Dendritic cell treated with granulocyte-macrophage colony-stimulating factor and Interleukin-4, amounts not matched to agents 40 ng/mL and 50 ng/mL, for 4 days (primary cell): ENCODE measurements at regions of chr17 and their contacts with region 1.

Region 1: GRCh38 chr17:70552230-70552981 is 383.1 kb downstream of the KCNJ2 start:
- H3K4me3 Mint-ChIP-seq: no peak overlapping the region
- H3K27ac Mint-ChIP-seq: no peak overlapping the region
- H3K4me1 Mint-ChIP-seq: peaks cover 17% of the 10 kb centered on the region
- H3K27me3 Mint-ChIP-seq: no peaks in the 10 kb centered on the region

Region 2: GRCh38 chr17:69567130-69567529 is 985.3 kb before region 1 on chr17:
- intact Hi-C with region 1: loop called (anchors 5 kb)
- H3K4me3 Mint-ChIP-seq: no peak overlapping the region
- H3K27ac Mint-ChIP-seq: no peak overlapping the region
- H3K4me1 Mint-ChIP-seq: no peaks in the 10 kb centered on the region
- H3K27me3 Mint-ChIP-seq: peaks cover 17% of the 10 kb centered on the region

Region 3: DNA sequence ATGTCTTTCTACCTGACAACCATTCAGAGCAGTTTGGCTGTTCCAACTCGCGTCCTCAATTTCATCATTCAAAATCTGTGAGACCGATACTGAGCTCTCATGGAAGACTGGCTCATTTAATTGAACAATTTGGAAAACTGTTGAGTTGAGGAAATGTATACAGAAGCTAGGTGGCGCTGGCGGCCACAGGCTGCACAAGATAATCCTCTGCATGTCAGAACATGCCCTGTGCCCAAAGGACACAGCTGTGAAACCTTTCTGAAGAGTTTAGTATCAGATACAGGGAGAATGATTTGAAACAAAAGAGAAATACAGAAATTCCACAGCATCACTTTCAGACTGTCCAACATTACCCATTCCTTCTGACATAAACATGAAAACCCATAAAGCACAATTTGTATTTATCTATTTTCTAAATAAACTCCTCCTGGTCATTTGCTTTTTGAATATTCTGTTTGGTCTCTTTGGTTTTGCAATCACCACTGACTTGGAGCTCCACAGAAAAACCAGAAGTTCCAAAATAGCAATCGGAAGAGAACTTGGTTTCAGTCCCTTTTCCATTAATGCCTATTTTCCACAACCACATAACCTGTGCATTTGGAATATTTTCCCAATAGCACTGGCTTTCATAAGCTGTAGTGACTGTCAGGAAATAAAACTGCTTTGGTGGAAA is 945.1 kb before region 1 on chr17:
- intact Hi-C with region 1: loop called (anchors 5 kb)
- H3K4me3 Mint-ChIP-seq: peak overlapping the region; percentile 9
- H3K27ac Mint-ChIP-seq: peak overlapping the region; percentile 43
- H3K4me1 Mint-ChIP-seq: peaks cover 19% of the 10 kb centered on the region
- H3K27me3 Mint-ChIP-seq: no peaks in the 10 kb centered on the region

Region 4: DNA sequence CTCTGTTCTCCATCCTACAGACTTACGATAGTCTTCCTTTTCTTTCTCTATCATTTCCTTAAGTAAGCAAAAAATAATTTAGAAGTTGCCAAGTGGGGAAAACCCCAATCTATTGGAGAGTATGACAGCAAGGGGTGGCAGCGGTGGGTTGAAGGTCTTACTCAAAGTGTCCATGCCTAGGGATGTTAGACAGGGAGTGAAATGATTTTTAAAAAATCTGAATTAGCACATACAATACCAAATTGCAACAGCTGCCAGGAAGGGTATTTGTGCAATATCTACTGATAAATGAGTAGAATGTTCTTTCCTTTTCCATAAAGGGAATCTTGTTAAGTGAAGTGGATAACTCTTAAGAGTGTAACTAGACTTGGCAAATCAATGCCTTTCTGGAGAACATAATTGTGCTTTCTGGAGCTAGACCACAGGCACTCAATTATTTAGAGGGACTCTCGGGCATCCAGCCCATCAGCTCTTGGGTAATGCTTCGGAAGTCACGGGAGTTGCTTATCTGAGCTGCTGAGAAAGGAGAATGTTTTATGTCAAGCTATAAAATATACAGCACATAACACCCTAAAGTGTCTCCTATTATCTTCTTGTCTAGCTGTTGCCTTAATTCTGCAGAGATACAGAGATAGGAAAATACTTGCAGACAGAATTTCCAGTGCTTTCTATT is 231.6 kb before region 1 on chr17:
- intact Hi-C with region 1: no loop called
- H3K4me3 Mint-ChIP-seq: no peak overlapping the region
- H3K27ac Mint-ChIP-seq: no peak overlapping the region
- H3K4me1 Mint-ChIP-seq: peaks cover 13% of the 10 kb centered on the region
- H3K27me3 Mint-ChIP-seq: no peaks in the 10 kb centered on the region

Region 5: DNA sequence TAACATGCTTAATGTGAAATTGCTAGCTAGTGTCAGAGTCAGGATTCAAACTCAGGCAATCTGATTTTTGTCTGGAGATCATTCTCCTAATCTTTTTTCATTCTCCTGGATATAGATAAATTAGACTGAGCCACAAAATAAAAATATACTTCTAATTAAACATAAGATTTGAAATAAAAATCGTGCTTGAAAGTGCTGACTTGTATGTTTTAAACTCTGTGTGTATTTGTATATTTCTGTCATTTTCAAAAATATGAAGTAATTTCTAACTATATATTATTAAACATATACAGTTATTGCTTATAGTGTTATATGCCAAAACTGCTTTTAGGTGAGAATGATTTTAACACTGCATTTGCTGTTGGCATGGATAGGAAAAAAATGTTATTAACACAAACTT is 143.6 kb before region 1 on chr17:
- intact Hi-C with region 1: no loop called
- H3K4me3 Mint-ChIP-seq: no peak overlapping the region
- H3K27ac Mint-ChIP-seq: no peak overlapping the region
- H3K4me1 Mint-ChIP-seq: peaks cover 33% of the 10 kb centered on the region
- H3K27me3 Mint-ChIP-seq: no peaks in the 10 kb centered on the region

Region 6: GRCh38 chr17:70420861-70421449 is 131.5 kb before region 1 on chr17:
- intact Hi-C with region 1: no loop called
- H3K4me3 Mint-ChIP-seq: no peak overlapping the region
- H3K27ac Mint-ChIP-seq: no peak overlapping the region
- H3K4me1 Mint-ChIP-seq: peaks cover 8% of the 10 kb centered on the region
- H3K27me3 Mint-ChIP-seq: peaks cover 2% of the 10 kb centered on the region

Region 7: GRCh38 chr17:70499067-70499786 is 53.2 kb before region 1 on chr17:
- intact Hi-C with region 1: loop called (anchors 10 kb)
- H3K4me3 Mint-ChIP-seq: no peak overlapping the region
- H3K27ac Mint-ChIP-seq: peak overlapping the region; percentile 74
- H3K4me1 Mint-ChIP-seq: peaks cover 32% of the 10 kb centered on the region
- H3K27me3 Mint-ChIP-seq: no peaks in the 10 kb centered on the region

Region 8: DNA sequence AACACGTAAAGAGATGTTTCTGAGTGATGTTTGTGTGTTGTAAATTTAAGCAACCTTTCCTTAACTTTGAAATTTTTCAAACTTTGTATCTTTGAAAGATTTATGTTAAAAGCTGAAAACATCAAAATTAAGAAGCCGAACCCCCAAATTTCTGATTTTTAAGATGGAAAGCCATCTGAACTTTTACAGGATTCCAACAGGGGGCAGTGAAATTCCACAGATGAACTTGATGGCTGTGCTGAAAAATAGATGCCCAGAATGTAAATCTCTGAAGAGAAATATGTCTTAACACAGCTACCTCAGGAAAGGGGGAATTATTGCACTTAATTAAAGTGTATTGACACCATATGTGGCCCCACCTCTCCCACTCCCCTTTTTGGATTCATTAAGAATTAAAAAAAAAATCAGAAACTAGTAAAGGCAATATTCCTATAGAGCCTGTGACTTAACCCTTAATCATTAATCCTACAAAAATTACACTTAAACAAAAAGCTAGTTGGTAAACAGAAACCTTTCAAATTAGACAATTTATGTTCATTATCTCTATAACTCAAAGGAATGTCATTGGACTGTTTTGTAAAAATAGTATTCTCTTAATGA is 214.8 kb after region 1 on chr17:
- intact Hi-C with region 1: no loop called
- H3K4me3 Mint-ChIP-seq: no peak overlapping the region
- H3K27ac Mint-ChIP-seq: no peak overlapping the region
- H3K4me1 Mint-ChIP-seq: no peaks in the 10 kb centered on the region
- H3K27me3 Mint-ChIP-seq: no peaks in the 10 kb centered on the region